ENCODE measurements at regions of chr16 and their contacts with region 1.

Region 1: GRCh38 chr16:67480833-67481560 is at the start of gene ATP6V0D1:
- DNase-seq: peak; percentile 99
- H3K4me3 Mint-ChIP-seq: peak within 1 kb of the TSS; percentile 98
- H3K27ac Mint-ChIP-seq: peak within 1 kb of the TSS; percentile 96
- H3K4me1 Mint-ChIP-seq: peaks cover 46% of the 10 kb centered on the region
- H3K27me3 Mint-ChIP-seq: no peaks in the 10 kb centered on the region
- total RNA-seq, gene ATP6V0D1: 52.8 to 59.5 TPM

Region 2: DNA sequence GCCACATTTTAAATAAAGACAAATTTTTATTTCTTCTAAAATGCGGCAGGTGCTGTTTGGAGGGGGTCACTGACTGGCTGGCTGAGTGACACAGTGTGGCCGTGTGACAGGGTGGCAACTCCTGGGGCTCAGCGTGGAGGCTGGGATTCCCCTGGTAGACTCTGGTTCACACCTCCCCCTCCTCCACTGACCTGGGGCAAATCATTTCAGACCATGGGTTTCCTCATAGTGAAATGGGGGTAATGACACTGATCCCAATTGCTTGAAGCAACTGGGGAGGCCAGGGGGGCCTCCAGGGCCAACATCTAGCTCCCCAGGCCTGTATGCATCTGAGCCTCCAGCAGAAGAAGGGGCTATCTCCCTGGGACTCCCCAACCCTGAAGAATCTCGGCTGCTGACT is 43.5 kb before region 1 on chr16:
- CTCF ChIA-PET with region 1: no interaction called
- POLR2A ChIA-PET with region 1: no interaction called
- DNase-seq: no peak
- H3K4me3 Mint-ChIP-seq: no peak overlapping the region
- H3K27ac Mint-ChIP-seq: no peak overlapping the region
- H3K4me1 Mint-ChIP-seq: no peaks in the 10 kb centered on the region
- H3K27me3 Mint-ChIP-seq: peaks cover under 1% of the 10 kb centered on the region

Region 3: DNA sequence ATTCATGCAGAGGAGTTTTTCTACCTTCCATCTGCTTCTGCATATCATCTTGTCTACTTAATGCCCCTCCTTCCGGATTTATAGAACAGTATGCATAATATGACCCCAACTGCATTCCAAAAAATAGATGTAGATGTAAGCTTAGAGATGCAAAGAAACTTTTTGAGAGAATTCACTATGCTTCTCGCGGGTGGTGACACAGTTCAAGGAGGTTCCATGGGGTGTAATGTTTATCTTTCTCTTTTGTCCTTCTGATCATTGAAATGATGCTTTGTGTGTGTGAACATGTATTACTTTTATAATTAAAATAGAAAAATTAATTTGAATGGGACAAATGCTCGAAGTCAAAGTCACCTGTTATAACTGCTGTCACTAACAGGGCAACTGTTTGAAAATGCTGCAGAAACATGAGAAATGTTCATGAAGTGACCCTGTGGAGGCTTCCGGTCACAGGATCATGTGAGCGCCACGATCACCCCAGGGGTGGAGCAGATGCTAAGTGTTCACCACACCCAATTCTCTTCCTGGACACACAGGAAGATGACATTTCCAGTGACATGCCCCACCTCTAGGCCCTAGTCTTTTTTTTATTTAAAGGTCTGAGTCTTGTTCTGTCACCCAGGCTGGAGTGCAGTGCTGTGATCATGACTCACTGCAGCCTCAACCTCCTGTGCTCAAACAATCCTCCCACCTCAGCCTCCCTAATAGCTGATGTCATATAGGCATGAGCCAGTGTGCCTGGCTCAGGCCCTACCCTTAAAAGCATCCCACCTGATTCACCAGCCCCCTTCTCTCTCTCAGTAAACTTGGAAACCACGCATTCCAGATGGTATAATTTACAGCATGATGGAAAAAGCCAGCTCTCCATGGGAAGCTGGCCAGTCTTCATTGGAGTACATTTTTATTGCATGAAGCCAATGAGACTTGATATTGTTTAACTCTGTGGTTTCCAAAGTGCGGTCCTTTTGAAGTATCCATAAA is 23.3 kb after region 1 on chr16:
- CTCF ChIA-PET with region 1: interaction called, 11 read pairs
- POLR2A ChIA-PET with region 1: interaction called, 13 read pairs
- DNase-seq: peak; percentile 85
- H3K4me3 Mint-ChIP-seq: no peak overlapping the region
- H3K27ac Mint-ChIP-seq: peak overlapping the region; percentile 97
- H3K4me1 Mint-ChIP-seq: peaks cover 49% of the 10 kb centered on the region
- H3K27me3 Mint-ChIP-seq: no peaks in the 10 kb centered on the region

Region 4: DNA sequence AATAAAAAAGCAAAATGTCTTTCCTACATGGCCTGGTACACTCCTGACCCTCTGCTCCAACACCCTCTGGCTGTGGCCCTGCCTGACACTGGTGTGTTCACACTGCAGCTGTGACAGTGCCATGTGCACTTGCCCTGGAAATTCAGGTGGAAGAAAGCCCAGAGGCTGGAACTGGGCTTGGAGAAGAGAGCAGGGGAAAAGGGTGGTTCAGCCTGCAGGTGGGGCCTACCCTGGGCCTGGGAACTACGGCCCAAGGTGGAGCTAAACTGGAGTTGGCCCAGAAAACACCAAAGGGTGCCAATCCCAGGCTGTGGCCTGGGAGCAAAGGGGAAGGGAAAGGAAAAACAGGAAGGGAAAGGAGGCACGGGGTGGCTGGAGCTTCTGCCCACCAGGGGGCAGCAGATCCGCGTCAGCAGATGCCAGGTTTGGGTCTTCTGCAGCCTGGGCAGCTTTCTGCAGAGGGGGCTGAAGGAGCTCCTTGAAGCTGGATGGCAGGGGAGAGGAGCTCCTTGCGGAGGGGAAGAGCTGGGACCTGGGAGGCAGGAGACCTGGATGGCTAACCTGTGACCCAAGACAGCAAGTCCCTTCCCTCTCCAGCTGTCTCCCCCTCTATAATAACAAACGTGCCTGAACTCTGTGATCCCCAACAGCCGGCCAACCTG is 65.9 kb after region 1 on chr16:
- CTCF ChIA-PET with region 1: interaction called, 13 read pairs
- POLR2A ChIA-PET with region 1: interaction called, 5 read pairs
- DNase-seq: peak; percentile 81
- H3K4me3 Mint-ChIP-seq: peak overlapping the region; percentile 37
- H3K27ac Mint-ChIP-seq: peak overlapping the region; percentile 96
- H3K4me1 Mint-ChIP-seq: peaks cover 47% of the 10 kb centered on the region
- H3K27me3 Mint-ChIP-seq: no peaks in the 10 kb centered on the region

Region 5: GRCh38 chr16:67561824-67562525 is 81.0 kb after region 1 on chr16:
- CTCF ChIA-PET with region 1: interaction called, 20 read pairs
- POLR2A ChIA-PET with region 1: interaction called, 23 read pairs
- DNase-seq: peak; percentile 99
- H3K4me3 Mint-ChIP-seq: peak overlapping the region; percentile 86
- H3K27ac Mint-ChIP-seq: peak overlapping the region; percentile 92
- H3K4me1 Mint-ChIP-seq: peaks cover 43% of the 10 kb centered on the region
- H3K27me3 Mint-ChIP-seq: no peaks in the 10 kb centered on the region

Region 6: DNA sequence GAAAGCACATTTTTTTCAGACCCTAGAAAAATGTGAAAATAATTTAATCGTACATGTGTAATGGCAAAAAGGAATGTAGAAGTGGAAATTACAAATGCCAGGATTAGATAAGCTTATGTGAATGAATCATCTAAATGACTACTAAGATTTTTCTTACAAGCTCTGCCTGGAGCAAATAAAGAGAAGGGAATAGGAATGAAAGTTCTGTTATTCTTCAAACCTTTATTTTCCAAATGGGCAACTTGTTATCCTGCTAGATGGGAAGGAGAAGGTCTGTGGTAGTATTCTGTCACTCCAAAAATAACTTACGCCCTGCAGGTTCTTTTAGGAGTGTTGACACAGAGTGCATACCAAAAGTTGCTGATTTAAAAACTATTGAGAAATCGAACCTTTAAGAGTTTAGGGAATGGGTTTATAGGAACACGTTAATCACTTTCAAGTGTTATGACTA is 91.0 kb after region 1 on chr16:
- CTCF ChIA-PET with region 1: no interaction called
- POLR2A ChIA-PET with region 1: no interaction called
- DNase-seq: no peak
- H3K4me3 Mint-ChIP-seq: no peak overlapping the region
- H3K27ac Mint-ChIP-seq: no peak overlapping the region
- H3K4me1 Mint-ChIP-seq: peaks cover 13% of the 10 kb centered on the region
- H3K27me3 Mint-ChIP-seq: no peaks in the 10 kb centered on the region

Region 7: DNA sequence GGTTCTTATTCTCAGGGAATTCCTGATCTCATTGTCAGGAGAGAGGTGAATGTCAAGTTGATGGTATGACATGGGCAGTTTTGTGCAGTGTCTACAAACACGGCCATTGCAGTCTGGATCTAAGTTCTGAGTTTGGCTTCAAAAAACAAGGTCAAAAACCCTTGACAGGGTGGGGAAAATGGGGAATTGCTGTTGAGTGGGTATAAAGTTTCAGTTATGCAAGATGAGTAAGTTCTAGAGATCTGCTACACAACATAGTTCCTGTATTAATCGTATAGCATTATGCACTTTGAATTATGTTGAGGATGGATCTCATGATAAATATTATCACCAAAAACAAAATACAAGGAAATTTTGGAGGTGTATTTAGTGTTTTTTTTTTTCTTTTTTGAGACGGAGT is 127.4 kb after region 1 on chr16:
- CTCF ChIA-PET with region 1: no interaction called
- POLR2A ChIA-PET with region 1: no interaction called
- DNase-seq: no peak
- H3K4me3 Mint-ChIP-seq: no peak overlapping the region
- H3K27ac Mint-ChIP-seq: peak overlapping the region; percentile 11
- H3K4me1 Mint-ChIP-seq: peaks cover 11% of the 10 kb centered on the region
- H3K27me3 Mint-ChIP-seq: no peaks in the 10 kb centered on the region

Region 8: GRCh38 chr16:67660564-67661028 is 179.6 kb after region 1 on chr16 and contains the start of gene PARD6A:
- CTCF ChIA-PET with region 1: interaction called, 6 read pairs
- POLR2A ChIA-PET with region 1: interaction called, 13 read pairs
- DNase-seq: peak; percentile 97
- H3K4me3 Mint-ChIP-seq: peak within 1 kb of the TSS; percentile 89
- H3K27ac Mint-ChIP-seq: peak within 1 kb of the TSS; percentile 96
- H3K4me1 Mint-ChIP-seq: peaks cover 35% of the 10 kb centered on the region
- H3K27me3 Mint-ChIP-seq: no peaks in the 10 kb centered on the region
- total RNA-seq, gene PARD6A: 12.2 to 14.0 TPM

Measured in activated CD4-positive, alpha-beta memory T cell treated with anti-CD3 and anti-CD28 coated beads, Interleukin-2, amount 10 ng/mL, durations not matched to agents 7 days and 5 days (primary cell).